GM12878 (cell line): ENCODE measurements at regions of chr2 and their contacts with region 1.

Region 1: GRCh38 chr2:12005886-12006681 is 259.7 kb downstream of the LPIN1 start:
- DNase-seq: peak; percentile 89
- ATAC-seq: peak; percentile 84
- H3K4me3 ChIP-seq: no peak overlapping the region
- H3K27ac ChIP-seq: peak overlapping the region; percentile 71; the same call in 1 of the 2 replicates
- H3K4me1 ChIP-seq: peaks cover 61% of the 10 kb centered on the region
- H3K27me3 ChIP-seq: no peaks in the 10 kb centered on the region
- CTCF ChIP-seq: no peak
- EP300 ChIP-seq: peak; percentile 93 to 95
- POLR2A ChIP-seq: no peak
- RAD21 ChIP-seq: no peak

Region 2: GRCh38 chr2:11873356-11874154 is 132.5 kb before region 1 on chr2:
- CTCF ChIA-PET with region 1: interaction called, 24 read pairs
- POLR2A ChIA-PET with region 1: interaction called, 26 read pairs
- RAD21 ChIA-PET with region 1: interaction called, 16 read pairs
- SMC1A ChIA-PET with region 1: interaction called, 68 read pairs
- in situ Hi-C with region 1: no loop called
- intact Hi-C with region 1: no loop called
- DNase-seq: no peak
- ATAC-seq: no peak
- H3K4me3 ChIP-seq: no peak overlapping the region; the same call in 1 of the 2 replicates
- H3K27ac ChIP-seq: no peak overlapping the region; the same call in 1 of the 2 replicates
- H3K4me1 ChIP-seq: peaks cover 12% of the 10 kb centered on the region
- H3K27me3 ChIP-seq: no peaks in the 10 kb centered on the region
- CTCF ChIP-seq: no peak
- EP300 ChIP-seq: no peak
- POLR2A ChIP-seq: no peak
- RAD21 ChIP-seq: no peak

Region 3: GRCh38 chr2:11945139-11946126 is 60.7 kb before region 1 on chr2:
- CTCF ChIA-PET with region 1: interaction called, 6 read pairs
- POLR2A ChIA-PET with region 1: interaction called, 5 read pairs
- RAD21 ChIA-PET with region 1: interaction called, 8 read pairs
- SMC1A ChIA-PET with region 1: interaction called, 8 read pairs
- in situ Hi-C with region 1: no loop called
- intact Hi-C with region 1: loop called (anchors 2 kb)
- DNase-seq: peak; percentile 50
- ATAC-seq: peak; percentile 90
- H3K4me3 ChIP-seq: no peak overlapping the region
- H3K27ac ChIP-seq: peak overlapping the region; percentile 48; the same call in 1 of the 2 replicates
- H3K4me1 ChIP-seq: peaks cover 13% of the 10 kb centered on the region
- H3K27me3 ChIP-seq: no peaks in the 10 kb centered on the region
- CTCF ChIP-seq: no peak
- EP300 ChIP-seq: no peak
- POLR2A ChIP-seq: no peak
- RAD21 ChIP-seq: no peak